ENCODE measurements at regions of chr7 and their contacts with region 1.

Region 1: GRCh38 chr7:98251841-98252639 is at the start of gene TECPR1:
- DNase-seq: peak; percentile 81 to 93 (median 89)
- ATAC-seq: peak; percentile 90
- H3K4me3 ChIP-seq: peak within 1 kb of the TSS; percentile 91
- H3K4me3 Mint-ChIP-seq: peak within 1 kb of the TSS; percentile 88 to 98 (median 94)
- H3K27ac ChIP-seq: peak within 1 kb of the TSS; percentile 83
- H3K27ac Mint-ChIP-seq: peak within 1 kb of the TSS; percentile 90 to 100 (median 99)
- H3K4me1 ChIP-seq: peaks cover 38 to 40% of the 10 kb centered on the region in 2 donors
- H3K4me1 Mint-ChIP-seq: peaks cover 41 to 78% (median 65%) of the 10 kb centered on the region in 7 donors
- H3K27me3 ChIP-seq: no peaks in the 10 kb centered on the region
- H3K27me3 Mint-ChIP-seq: no peaks in the 10 kb centered on the region
- total RNA-seq, gene TECPR1: 82.4 to 203 (median 134) TPM

Region 2: GRCh38 chr7:97872025-97872669 is 379.9 kb before region 1 on chr7 and contains the start of gene ASNS:
- CTCF ChIA-PET with region 1: no interaction called
- POLR2A ChIA-PET with region 1: interaction called, 4 read pairs
- intact Hi-C with region 1: loop called in 1 of 2 experiments (anchors 5 kb)
- DNase-seq: peak; percentile 59 to 92 (median 82)
- ATAC-seq: peak; percentile 92
- H3K4me3 ChIP-seq: peak within 1 kb of the TSS; percentile 79
- H3K4me3 Mint-ChIP-seq: peak within 1 kb of the TSS; percentile 87 to 92 (median 91)
- H3K27ac ChIP-seq: peak within 1 kb of the TSS; percentile 76
- H3K27ac Mint-ChIP-seq: peak within 1 kb of the TSS; percentile 66 to 93 (median 91)
- H3K4me1 ChIP-seq: peaks cover 0 to 15% of the 10 kb centered on the region in 2 donors
- H3K4me1 Mint-ChIP-seq: peaks cover 9 to 26% (median 15%) of the 10 kb centered on the region in 7 donors
- H3K27me3 ChIP-seq: no peaks in the 10 kb centered on the region
- H3K27me3 Mint-ChIP-seq: no peaks in the 10 kb centered on the region
- total RNA-seq, gene ASNS: 23.1 to 49.3 (median 31.8) TPM

Region 3: DNA sequence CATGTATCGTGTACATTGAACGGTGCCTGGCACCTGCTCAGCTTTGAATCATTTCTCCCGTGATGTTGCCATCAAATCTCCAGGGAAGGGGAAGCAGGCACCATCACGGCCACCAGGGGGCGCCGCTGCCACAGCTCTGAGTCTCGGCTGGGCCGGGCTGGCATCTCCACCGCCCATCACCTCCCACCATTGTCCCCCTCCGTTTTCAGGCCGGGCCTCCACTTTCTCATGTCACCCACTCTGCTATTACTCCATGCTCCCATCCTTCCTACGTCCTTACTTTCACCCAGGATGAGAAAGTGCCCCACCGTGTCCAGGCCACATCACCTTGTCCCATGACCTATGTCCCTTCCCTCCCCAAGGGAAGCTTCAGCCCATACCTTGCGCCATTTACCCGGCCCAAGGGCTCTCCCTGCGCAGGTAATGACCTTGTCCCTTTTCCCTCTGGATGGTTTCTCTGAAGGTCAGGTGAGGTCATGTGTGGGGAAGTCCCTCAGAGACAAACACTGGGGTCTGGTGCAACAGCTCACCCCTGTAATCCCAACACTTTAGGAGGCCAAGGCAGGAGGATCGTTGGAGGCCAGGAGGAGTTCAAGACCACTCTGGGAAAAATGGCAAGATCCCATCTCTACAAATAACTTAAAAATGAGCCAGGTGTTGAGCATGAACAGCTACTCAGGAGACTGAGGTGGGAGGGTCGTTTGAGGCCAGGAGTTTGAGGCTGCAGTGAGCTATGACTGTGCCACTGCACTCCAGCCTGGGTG is 230.3 kb before region 1 on chr7:
- CTCF ChIA-PET with region 1: no interaction called
- POLR2A ChIA-PET with region 1: no interaction called
- intact Hi-C with region 1: loop called in 1 of 2 experiments (anchors 5 kb)
- DNase-seq: peak; percentile 44 to 84 (median 72)
- ATAC-seq: peak; percentile 88
- H3K4me3 ChIP-seq: no peak overlapping the region
- H3K4me3 Mint-ChIP-seq: no peak overlapping the region
- H3K27ac ChIP-seq: no peak overlapping the region
- H3K27ac Mint-ChIP-seq: peak overlapping the region in 1 of 9 donors; percentile 27
- H3K4me1 ChIP-seq: no peaks in the 10 kb centered on the region
- H3K4me1 Mint-ChIP-seq: peaks cover 0 to 5% (median 5%) of the 10 kb centered on the region in 7 donors
- H3K27me3 ChIP-seq: no peaks in the 10 kb centered on the region
- H3K27me3 Mint-ChIP-seq: peaks cover 0 to 10% (median 7%) of the 10 kb centered on the region in 5 donors

Region 4: GRCh38 chr7:98202367-98203195 is 49.5 kb before region 1 on chr7:
- CTCF ChIA-PET with region 1: interaction called, 4 read pairs
- POLR2A ChIA-PET with region 1: interaction called, 39 read pairs
- intact Hi-C with region 1: loop called (anchors 1 to 2 kb)
- DNase-seq: peak in 8 of 9 donors; percentile 60 to 71 (median 64)
- ATAC-seq: peak; percentile 93
- H3K4me3 ChIP-seq: peak overlapping the region; percentile 24
- H3K4me3 Mint-ChIP-seq: peak overlapping the region; percentile 81 to 91 (median 86)
- H3K27ac ChIP-seq: peak overlapping the region; percentile 60
- H3K27ac Mint-ChIP-seq: peak overlapping the region; percentile 55 to 96 (median 80)
- H3K4me1 ChIP-seq: peaks cover 21 to 49% of the 10 kb centered on the region in 2 donors
- H3K4me1 Mint-ChIP-seq: peaks cover 35 to 76% (median 65%) of the 10 kb centered on the region in 7 donors
- H3K27me3 ChIP-seq: no peaks in the 10 kb centered on the region
- H3K27me3 Mint-ChIP-seq: no peaks in the 10 kb centered on the region

Region 5: DNA sequence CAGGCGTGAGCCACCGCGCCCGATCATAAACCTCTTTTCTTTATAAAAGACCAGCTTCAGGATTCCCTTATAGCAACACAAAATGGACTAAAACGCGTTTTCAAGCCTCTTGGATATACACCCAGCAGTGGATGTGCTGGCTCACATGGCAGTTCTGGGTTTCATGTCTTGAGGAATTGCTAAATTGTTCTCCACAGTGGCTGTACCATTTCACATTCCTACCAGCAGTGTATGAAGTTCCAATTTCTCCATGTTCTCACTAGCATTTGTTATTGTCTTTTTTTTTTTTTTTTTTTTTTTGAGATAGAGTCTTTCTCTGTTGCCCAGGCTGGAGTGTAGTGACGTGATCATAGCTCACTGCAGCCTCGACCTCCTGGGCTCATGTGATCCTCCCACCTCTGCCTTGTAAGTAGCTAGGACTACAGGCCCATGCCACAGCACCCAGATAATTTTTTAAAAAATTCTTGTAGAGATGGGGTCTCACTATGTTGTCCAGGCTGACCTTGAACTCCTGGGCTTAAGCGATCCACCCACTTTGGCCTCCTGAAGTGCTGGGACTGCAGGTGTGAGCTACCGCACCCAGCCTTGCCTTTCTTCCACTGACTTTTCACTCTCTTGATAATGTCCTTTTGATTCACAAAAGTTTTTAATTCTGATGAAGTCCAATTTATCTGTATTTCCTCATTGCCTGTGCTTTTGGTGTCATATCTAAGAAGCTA is 17.5 kb before region 1 on chr7:
- CTCF ChIA-PET with region 1: no interaction called
- POLR2A ChIA-PET with region 1: interaction called, 22 read pairs
- intact Hi-C with region 1: no loop called
- DNase-seq: no peak
- ATAC-seq: no peak
- H3K4me3 ChIP-seq: no peak overlapping the region
- H3K4me3 Mint-ChIP-seq: no peak overlapping the region
- H3K27ac ChIP-seq: no peak overlapping the region
- H3K27ac Mint-ChIP-seq: peak overlapping the region in 2 of 9 donors; percentile 22 to 61
- H3K4me1 ChIP-seq: no peaks in the 10 kb centered on the region
- H3K4me1 Mint-ChIP-seq: peaks cover 0 to 4% (median 0%) of the 10 kb centered on the region in 7 donors
- H3K27me3 ChIP-seq: no peaks in the 10 kb centered on the region
- H3K27me3 Mint-ChIP-seq: no peaks in the 10 kb centered on the region

Region 6: DNA sequence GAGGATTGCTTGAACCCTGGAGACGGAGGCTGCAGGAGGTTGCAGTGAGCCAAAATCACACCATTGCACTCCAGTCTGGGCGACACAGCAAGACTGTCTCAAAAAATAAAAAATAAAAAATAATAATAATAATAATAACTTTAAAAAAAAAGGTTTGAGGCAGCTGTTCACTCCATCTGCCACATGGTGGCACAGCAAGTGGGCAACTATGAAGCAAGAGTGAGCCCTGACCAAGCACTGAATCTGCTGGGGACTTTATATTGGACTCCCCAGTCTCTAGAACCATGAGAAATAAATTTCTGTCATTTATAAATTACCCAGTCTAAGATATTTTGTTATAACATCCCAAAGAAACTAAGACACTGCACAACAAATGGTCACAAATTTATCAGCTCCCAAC is 14.8 kb after region 1 on chr7:
- CTCF ChIA-PET with region 1: interaction called, 4 read pairs
- POLR2A ChIA-PET with region 1: interaction called, 10 read pairs
- intact Hi-C with region 1: loop called in 1 of 2 experiments (anchors 1 kb)
- DNase-seq: no peak
- ATAC-seq: peak; percentile 66
- H3K4me3 ChIP-seq: no peak overlapping the region
- H3K4me3 Mint-ChIP-seq: no peak overlapping the region
- H3K27ac ChIP-seq: no peak overlapping the region
- H3K27ac Mint-ChIP-seq: peak overlapping the region in 4 of 9 donors; percentile 20 to 43 (median 31)
- H3K4me1 ChIP-seq: no peaks in the 10 kb centered on the region
- H3K4me1 Mint-ChIP-seq: peaks cover 6 to 17% (median 15%) of the 10 kb centered on the region in 7 donors
- H3K27me3 ChIP-seq: no peaks in the 10 kb centered on the region
- H3K27me3 Mint-ChIP-seq: no peaks in the 10 kb centered on the region

Region 7: GRCh38 chr7:98400542-98401340 is 148.7 kb after region 1 on chr7 and contains the start of gene BAIAP2L1:
- CTCF ChIA-PET with region 1: no interaction called
- POLR2A ChIA-PET with region 1: interaction called, 3 read pairs
- intact Hi-C with region 1: loop called in 1 of 2 experiments (anchors 1 kb)
- DNase-seq: peak; percentile 54 to 82 (median 70)
- ATAC-seq: peak; percentile 96
- H3K4me3 ChIP-seq: peak within 1 kb of the TSS; percentile 41
- H3K4me3 Mint-ChIP-seq: peak within 1 kb of the TSS; percentile 66 to 84 (median 74)
- H3K27ac ChIP-seq: peak within 1 kb of the TSS; percentile 39
- H3K27ac Mint-ChIP-seq: peak within 1 kb of the TSS in 5 of 9 donors; percentile 25 to 75 (median 59)
- H3K4me1 ChIP-seq: peaks cover 0 to 5% of the 10 kb centered on the region in 2 donors
- H3K4me1 Mint-ChIP-seq: peaks cover 0 to 14% (median 6%) of the 10 kb centered on the region in 7 donors
- H3K27me3 ChIP-seq: no peaks in the 10 kb centered on the region
- H3K27me3 Mint-ChIP-seq: peaks cover 0 to 23% (median 9%) of the 10 kb centered on the region in 5 donors
- total RNA-seq, gene BAIAP2L1: 0.32 to 2.0 (median 0.56) TPM

Region 8: GRCh38 chr7:98598846-98599615 is 347.0 kb after region 1 on chr7:
- CTCF ChIA-PET with region 1: no interaction called
- POLR2A ChIA-PET with region 1: no interaction called
- intact Hi-C with region 1: no loop called
- DNase-seq: no peak
- ATAC-seq: no peak
- H3K4me3 ChIP-seq: no peak overlapping the region
- H3K4me3 Mint-ChIP-seq: no peak overlapping the region
- H3K27ac ChIP-seq: no peak overlapping the region
- H3K27ac Mint-ChIP-seq: no peak overlapping the region
- H3K4me1 ChIP-seq: no peaks in the 10 kb centered on the region
- H3K4me1 Mint-ChIP-seq: no peaks in the 10 kb centered on the region
- H3K27me3 ChIP-seq: no peaks in the 10 kb centered on the region
- H3K27me3 Mint-ChIP-seq: peaks cover 0 to 24% (median 7%) of the 10 kb centered on the region in 5 donors